ENCODE measurements at regions of chr16 and their contacts with region 1.

Region 1: DNA sequence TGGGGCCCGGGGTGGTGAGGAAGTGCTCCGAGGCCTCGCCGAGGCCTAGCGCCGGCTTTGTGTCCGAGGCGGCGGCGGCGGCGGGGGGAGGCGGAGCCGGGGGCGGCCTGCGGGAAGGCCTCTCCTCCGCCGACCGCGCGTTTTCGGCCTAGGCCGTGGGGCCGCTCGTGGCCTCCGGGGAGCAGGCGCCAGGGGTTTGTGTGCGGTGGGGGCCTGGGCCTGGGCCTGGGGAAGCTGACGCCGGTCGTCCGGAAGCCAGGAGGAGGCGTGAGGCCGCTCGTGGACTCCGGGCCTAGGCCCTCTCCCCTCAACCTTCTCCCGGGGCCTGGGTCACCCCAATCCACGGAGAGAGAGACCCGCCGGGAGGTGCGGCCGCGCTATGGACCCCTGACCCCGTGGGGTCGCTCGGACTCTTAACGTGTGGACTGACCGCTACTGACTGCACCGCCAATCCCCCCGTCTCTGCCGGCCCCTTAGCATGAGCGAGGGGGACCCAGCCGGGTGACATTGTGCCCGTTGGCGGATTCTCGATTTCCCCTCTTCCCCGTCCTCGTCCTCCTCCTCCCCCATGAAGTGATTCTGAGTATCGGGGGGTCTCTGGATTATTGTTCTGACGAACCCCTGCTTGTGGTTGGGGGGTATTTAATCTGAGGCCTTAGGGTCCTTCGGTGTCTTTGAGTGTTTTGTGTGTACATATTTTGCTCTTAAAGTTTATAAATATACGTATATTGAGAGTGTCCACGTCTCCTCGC is 660 bp downstream of the RBBP6 start:
- DNase-seq: no peak

Region 2: GRCh38 chr16:24508614-24509013 is 31.4 kb before region 1 on chr16:
- in situ Hi-C with region 1: no loop called
- DNase-seq: peak; percentile 19

Region 3: DNA sequence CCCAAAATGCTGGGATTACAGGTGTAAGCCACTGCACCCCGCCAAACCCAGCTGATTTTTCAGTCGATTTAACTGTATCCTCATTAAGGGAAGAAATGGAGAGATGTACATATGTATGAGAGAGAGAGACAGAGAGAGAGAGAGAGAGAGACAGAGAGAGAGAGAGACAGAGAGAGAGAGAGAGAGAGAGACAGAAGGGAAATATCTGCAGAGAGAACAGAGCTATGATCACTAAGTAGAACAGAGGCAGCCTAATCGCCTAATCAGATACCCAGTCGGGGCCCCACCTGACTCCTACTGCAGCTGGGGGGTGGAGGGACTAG is 69.4 kb after region 1 on chr16:
- in situ Hi-C with region 1: loop called (anchors 5 kb)
- DNase-seq: no peak

Measured in G401 (cell line).